HCT116 (cell line): ENCODE measurements at regions of chr18 and their contacts with region 1.

Region 1: DNA sequence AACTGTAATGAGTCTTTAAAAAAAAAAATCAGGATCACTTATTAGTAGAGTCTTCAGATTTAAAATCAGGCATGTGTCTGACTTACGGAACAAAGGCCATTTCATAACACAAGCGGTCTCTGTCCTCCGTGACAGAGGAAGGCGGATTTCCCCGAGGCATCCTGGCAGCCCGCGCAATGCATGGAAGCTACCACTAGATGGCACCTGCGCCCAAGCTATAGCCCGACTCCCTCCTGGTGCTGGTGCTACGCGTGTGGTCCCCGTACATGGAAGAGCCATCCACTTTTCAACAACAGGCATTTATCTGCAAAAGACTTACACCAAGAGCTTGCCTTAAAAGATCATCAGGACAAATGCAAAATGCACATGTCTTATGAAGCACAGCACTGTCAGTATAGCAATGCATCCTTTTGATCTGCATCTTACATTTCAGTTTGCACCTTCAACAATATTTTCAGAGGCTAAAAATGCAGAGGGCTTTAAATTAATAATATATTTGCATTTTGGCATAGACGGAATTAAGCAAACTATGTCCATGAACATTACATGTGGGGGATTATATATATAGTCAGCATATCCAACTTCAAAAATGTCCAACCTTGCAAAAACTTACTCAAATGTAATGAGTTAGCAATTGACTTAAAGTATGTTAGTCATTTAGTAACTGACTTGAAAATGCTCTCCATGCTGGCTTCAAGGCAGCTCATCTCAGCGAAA is 96.0 kb downstream of the ZNF516 start:
- DNase-seq: peak; percentile 34
- ATAC-seq: peak; percentile 97
- H3K4me3 ChIP-seq: no peak overlapping the region
- H3K27ac ChIP-seq: no peak overlapping the region
- H3K4me1 ChIP-seq: no peaks in the 10 kb centered on the region
- H3K27me3 ChIP-seq: no peaks in the 10 kb centered on the region
- CTCF ChIP-seq: peak; percentile 79 to 98 (median 94)
- POLR2A ChIP-seq: no peak
- RAD21 ChIP-seq: peak; percentile 92

Region 2: GRCh38 chr18:76113101-76113500 is 286.0 kb before region 1 on chr18:
- CTCF ChIA-PET with region 1: no interaction called
- POLR2A ChIA-PET with region 1: no interaction called
- RAD21 ChIA-PET with region 1: no interaction called
- intact Hi-C with region 1: no loop called
- DNase-seq: no peak
- ATAC-seq: no peak
- H3K4me3 ChIP-seq: no peak overlapping the region
- H3K27ac ChIP-seq: no peak overlapping the region
- H3K4me1 ChIP-seq: no peaks in the 10 kb centered on the region
- H3K27me3 ChIP-seq: no peaks in the 10 kb centered on the region
- CTCF ChIP-seq: no peak
- POLR2A ChIP-seq: no peak
- RAD21 ChIP-seq: no peak

Region 3: GRCh38 chr18:76620321-76621170 is 221.5 kb after region 1 on chr18:
- CTCF ChIA-PET with region 1: no interaction called
- POLR2A ChIA-PET with region 1: no interaction called
- RAD21 ChIA-PET with region 1: interaction called in 1 of 2 experiments, 3 read pairs
- intact Hi-C with region 1: loop called (anchors 1 kb)
- DNase-seq: peak; percentile 34
- ATAC-seq: peak; percentile 95
- H3K4me3 ChIP-seq: no peak overlapping the region
- H3K27ac ChIP-seq: no peak overlapping the region
- H3K4me1 ChIP-seq: peaks cover 5 to 14% of the 10 kb centered on the region in 2 experiments; a peak in 3 of 4 replicates
- H3K27me3 ChIP-seq: no peaks in the 10 kb centered on the region
- CTCF ChIP-seq: peak; percentile 38 to 57 (median 38); a peak in 5 of 6 replicates
- POLR2A ChIP-seq: no peak
- RAD21 ChIP-seq: peak; percentile 68

Region 4: DNA sequence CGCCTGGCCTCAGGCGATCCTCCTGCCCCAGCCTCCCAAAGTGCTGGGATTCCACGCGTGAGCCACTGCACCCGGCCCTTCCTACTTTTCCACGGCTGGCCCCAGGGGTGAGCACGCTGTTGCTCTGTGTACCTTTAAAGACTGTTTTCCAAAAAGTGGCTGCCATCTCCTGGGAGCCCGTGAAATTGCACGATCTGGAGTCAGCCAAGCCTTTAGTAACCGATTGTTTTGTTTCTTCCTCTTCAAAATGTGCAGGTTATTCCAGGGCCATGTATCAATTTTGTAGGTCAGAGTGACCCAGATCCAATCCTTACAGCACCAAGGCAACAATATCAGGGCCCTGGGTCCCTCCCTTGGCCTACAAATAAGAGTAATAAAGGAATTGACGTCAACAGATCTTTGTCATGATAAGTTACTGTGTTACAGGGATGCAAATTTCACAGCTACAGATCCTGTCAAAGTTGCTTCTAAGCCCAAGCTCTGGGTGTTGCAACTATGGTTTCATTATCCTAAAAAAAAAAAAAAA is 287.7 kb after region 1 on chr18:
- CTCF ChIA-PET with region 1: interaction called, 15 read pairs
- POLR2A ChIA-PET with region 1: no interaction called
- RAD21 ChIA-PET with region 1: interaction called, 3 to 5 read pairs
- intact Hi-C with region 1: loop called (anchors 1 kb)
- DNase-seq: peak; percentile 44
- ATAC-seq: peak; percentile 96
- H3K4me3 ChIP-seq: no peak overlapping the region
- H3K27ac ChIP-seq: no peak overlapping the region
- H3K4me1 ChIP-seq: peaks cover 2 to 6% of the 10 kb centered on the region in 2 experiments; a peak in 2 of 4 replicates
- H3K27me3 ChIP-seq: peaks cover 16% of the 10 kb centered on the region
- CTCF ChIP-seq: peak; percentile 63 to 74 (median 70); a peak in 5 of 6 replicates
- POLR2A ChIP-seq: no peak
- RAD21 ChIP-seq: peak; percentile 82

Region 5: GRCh38 chr18:76709659-76710645 is 310.9 kb after region 1 on chr18:
- CTCF ChIA-PET with region 1: interaction called, 23 read pairs
- POLR2A ChIA-PET with region 1: no interaction called
- RAD21 ChIA-PET with region 1: interaction called in 1 of 2 experiments, 3 read pairs
- intact Hi-C with region 1: loop called (anchors 1 kb)
- DNase-seq: peak; percentile 52
- ATAC-seq: peak; percentile 95
- H3K4me3 ChIP-seq: no peak overlapping the region
- H3K27ac ChIP-seq: no peak overlapping the region
- H3K4me1 ChIP-seq: peaks cover 0 to 3% of the 10 kb centered on the region in 2 experiments; a peak in 2 of 4 replicates
- H3K27me3 ChIP-seq: no peaks in the 10 kb centered on the region
- CTCF ChIP-seq: peak; percentile 79 to 94 (median 79)
- POLR2A ChIP-seq: no peak
- RAD21 ChIP-seq: peak; percentile 95